ENCODE measurements at regions of chr4 and their contacts with region 1.

Region 1: DNA sequence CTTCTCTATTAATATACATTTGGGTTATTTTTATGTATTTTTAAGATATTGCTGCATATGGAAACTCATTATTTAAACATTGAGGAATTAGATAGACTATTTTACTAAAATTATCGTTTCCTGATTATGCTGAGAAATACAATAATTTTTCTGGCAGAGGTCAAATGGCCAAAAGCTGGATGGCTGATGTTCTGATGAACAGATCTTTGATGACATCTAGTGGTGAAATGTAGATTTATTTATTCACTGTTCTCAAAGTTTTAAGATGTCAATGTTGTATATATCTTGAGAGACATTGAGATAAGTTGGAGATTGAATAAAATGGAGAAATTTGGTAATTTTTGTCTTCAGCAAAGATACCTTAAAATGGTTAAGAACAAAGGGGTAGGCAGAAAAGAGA is 96.2 kb downstream of the UGT8 start:
- DNase-seq: peak; percentile 49
- H3K4me3 Mint-ChIP-seq: no peak overlapping the region
- H3K27ac Mint-ChIP-seq: no peak overlapping the region
- H3K4me1 Mint-ChIP-seq: no peaks in the 10 kb centered on the region
- H3K27me3 Mint-ChIP-seq: peaks cover 25% of the 10 kb centered on the region
- CTCF ChIP-seq: peak; percentile 55

Region 2: DNA sequence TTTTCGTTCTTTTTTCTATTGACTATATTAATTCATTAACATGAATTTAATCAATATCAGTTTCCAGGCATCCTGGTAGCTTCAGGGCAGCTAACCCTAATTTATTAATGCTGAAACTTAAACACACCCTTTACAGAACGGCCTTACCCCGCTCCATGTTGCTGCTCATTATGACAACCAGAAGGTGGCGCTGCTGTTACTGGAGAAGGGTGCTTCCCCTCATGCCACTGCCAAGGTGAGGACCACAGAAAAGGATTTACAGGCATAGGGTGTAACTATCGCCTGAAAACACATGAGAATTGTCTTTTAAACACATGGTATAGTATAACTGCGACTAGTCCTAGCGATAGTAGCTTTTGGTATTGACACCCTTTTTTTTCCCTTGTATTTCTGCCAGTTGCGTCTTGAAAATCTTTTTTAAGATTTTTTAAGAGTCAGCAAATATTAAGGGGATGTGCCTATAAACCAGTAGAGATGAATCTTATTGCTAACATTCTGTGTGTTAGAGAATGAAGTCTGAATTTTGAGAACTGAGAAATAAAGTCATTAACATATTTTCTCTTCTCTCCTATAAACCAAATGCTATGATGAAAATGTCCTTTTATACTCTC is 1416.3 kb before region 1 on chr4:
- CTCF ChIA-PET with region 1: no interaction called
- POLR2A ChIA-PET with region 1: no interaction called
- intact Hi-C with region 1: loop called (anchors 10 kb)
- DNase-seq: peak; percentile 90
- H3K4me3 Mint-ChIP-seq: no peak overlapping the region
- H3K27ac Mint-ChIP-seq: no peak overlapping the region
- H3K4me1 Mint-ChIP-seq: no peaks in the 10 kb centered on the region
- H3K27me3 Mint-ChIP-seq: no peaks in the 10 kb centered on the region
- CTCF ChIP-seq: peak; percentile 80